ENCODE measurements at regions of chr10 and their contacts with region 1.

Region 1: GRCh38 chr10:84194424-84195040 is at the start of gene CDHR1:
- DNase-seq: peak; percentile 72
- ATAC-seq: peak; percentile 92
- H3K4me3 Mint-ChIP-seq: peak within 1 kb of the TSS; percentile 57
- H3K27ac Mint-ChIP-seq: no peak within 1 kb of the TSS
- H3K4me1 Mint-ChIP-seq: peaks cover 10% of the 10 kb centered on the region
- H3K27me3 Mint-ChIP-seq: peaks cover 10% of the 10 kb centered on the region
- CTCF ChIP-seq: no peak
- total RNA-seq, gene CDHR1: 1.8 to 2.4 TPM

Region 2: GRCh38 chr10:84097787-84098353 is 96.7 kb before region 1 on chr10:
- CTCF ChIA-PET with region 1: no interaction called
- POLR2A ChIA-PET with region 1: no interaction called
- intact Hi-C with region 1: no loop called
- DNase-seq: no peak
- ATAC-seq: no peak
- H3K4me3 Mint-ChIP-seq: no peak overlapping the region
- H3K27ac Mint-ChIP-seq: no peak overlapping the region
- H3K4me1 Mint-ChIP-seq: no peaks in the 10 kb centered on the region
- H3K27me3 Mint-ChIP-seq: no peaks in the 10 kb centered on the region
- CTCF ChIP-seq: peak; percentile 59

Region 3: DNA sequence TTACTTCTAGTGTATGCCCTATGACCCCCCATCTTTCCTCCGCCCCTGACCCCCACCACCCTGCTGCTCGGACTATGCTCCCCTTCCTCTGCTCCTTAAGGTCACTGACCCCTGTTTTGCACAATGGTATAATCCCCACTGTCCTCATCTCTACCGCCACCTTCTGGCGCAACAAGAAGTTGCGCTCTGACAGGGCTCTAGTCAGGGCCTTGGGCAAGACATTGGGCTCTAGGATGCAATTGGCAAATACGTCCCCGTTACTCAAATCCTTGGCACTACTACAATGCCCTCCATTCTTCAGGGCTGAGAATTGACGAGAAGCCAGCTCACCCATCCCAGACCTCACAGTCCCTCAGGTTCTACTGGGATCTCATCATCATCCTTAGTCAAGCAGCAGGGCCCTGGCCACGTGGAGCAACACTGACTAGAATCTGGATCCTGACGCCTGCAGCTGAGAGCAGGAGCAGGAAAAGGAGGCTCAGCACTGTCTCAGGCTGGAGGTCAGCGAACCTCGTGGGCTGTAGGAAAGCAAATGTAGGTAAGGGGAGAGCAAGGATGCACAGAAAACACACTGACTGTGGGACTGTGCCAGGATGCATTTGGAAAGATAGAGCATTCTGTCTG is 20.2 kb after region 1 on chr10:
- CTCF ChIA-PET with region 1: interaction called, 12 read pairs
- POLR2A ChIA-PET with region 1: no interaction called
- intact Hi-C with region 1: no loop called
- DNase-seq: peak; percentile 52
- ATAC-seq: peak; percentile 80
- H3K4me3 Mint-ChIP-seq: no peak overlapping the region
- H3K27ac Mint-ChIP-seq: no peak overlapping the region
- H3K4me1 Mint-ChIP-seq: no peaks in the 10 kb centered on the region
- H3K27me3 Mint-ChIP-seq: no peaks in the 10 kb centered on the region
- CTCF ChIP-seq: peak; percentile 30